Left cardiac atrium (tissue), 4 donors: ENCODE measurements at regions of chr14 and their contacts with region 1.

Region 1: GRCh38 chr14:69129264-69129880 is 23.5 kb downstream of the DCAF5 start:
- DNase-seq: peak; percentile 77
- ATAC-seq: peak; percentile 74 to 90

Region 2: DNA sequence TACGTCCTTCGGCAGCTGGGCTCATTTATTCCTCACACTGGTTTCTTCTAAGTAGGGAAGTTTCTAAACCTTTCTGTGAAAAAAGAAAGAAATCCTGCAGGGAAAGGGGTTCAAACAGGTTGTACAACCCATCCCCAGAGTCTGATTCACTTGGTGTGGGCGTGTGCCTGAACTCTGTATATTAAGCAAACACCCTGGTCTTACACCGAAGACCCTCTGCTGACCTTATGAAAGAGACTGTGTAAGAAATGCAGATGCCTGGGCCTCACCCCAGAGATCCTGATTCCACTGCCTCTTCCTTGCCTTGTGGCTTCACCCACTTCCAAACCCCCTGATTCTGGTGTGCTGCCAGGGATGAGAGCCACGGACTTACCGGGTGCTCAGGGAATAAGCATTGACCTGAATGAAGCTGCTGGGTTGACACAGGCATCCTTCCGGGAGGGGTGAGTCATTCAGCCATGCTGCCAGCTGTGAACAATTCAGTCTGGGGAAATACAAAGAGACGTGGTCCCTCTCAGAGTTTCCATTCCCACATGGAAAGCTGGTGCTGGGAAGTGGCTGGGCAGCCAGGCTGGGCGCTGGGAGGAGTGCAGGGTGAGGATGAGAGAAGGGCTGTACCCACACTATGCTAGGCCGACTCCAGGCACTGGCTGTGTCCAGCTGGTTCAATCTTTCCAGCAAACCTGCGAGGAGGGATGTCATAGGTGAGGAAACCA is 123.8 kb before region 1 on chr14:
- intact Hi-C with region 1: no loop called
- DNase-seq: peak; percentile 86
- ATAC-seq: peak; percentile 41 to 95

Region 3: GRCh38 chr14:69038455-69039287 is 90.7 kb before region 1 on chr14:
- intact Hi-C with region 1: no loop called
- DNase-seq: peak; percentile 40
- ATAC-seq: peak; percentile 28 to 48

Region 4: GRCh38 chr14:69226178-69226577 is 96.8 kb after region 1 on chr14:
- intact Hi-C with region 1: loop called (anchors 5 to 10 kb)
- DNase-seq: peak; percentile 35
- ATAC-seq: peak; percentile 82 to 91

Region 5: DNA sequence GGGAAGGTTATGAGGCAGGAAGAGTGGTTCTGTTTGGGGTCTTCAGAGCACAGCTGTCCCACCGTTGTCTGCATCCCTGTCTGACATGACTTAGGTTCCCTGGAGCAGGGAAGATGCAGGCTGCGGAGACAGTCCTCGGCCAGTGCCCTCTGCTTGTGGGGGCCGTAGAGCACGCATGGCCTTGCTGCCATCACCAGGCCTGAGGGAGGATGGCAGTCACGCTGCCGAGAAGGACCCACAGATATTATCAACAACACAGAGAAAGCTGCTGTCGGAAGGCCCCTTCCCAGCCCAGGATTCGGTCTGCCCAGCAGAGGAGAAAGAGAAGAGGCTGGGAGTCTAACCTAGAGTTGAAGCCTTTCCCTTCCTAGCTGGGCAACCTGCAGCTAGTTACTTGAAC is 233.7 kb after region 1 on chr14:
- intact Hi-C with region 1: loop called in 1 of 2 experiments (anchors 10 kb)
- DNase-seq: peak; percentile 53
- ATAC-seq: peak; percentile 83 to 94

Region 6: DNA sequence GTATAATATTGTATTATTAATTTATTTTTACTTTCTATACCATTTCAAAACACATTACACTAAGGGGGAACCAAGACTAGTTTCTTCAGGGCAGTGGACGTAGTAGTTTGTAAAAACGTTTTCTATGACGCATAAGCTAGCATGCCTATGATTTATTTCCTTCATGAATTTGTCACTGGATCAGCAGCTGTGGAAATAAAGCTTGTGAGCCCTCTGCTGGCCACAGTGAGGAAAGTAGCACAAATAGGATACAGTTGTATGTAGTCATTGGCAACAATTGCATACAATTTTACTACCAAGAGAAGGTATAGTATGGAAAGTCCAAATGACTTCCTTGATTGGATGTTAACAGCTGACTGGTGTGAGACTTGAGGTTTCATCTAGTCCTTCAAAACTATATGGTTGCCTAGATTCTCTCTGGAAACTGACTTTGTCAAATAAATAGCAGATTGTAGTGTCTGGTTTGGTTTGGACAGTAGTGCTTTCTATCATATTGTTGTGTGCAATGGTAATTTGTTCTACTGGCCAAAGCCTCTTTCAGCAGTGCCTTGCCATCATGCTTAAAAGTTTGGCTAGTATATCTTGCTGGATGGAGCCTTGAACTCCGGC is 330.8 kb after region 1 on chr14:
- intact Hi-C with region 1: loop called in 1 of 2 experiments (anchors 5 kb)
- DNase-seq: peak; percentile 68
- ATAC-seq: peak; percentile 83 to 92